ENCODE measurements at regions of chr1 and their contacts with region 1.

Region 1: GRCh38 chr1:199759268-199759724 is 268.2 kb upstream of the NR5A2 start:
- DNase-seq: peak; percentile 92
- ATAC-seq: peak; percentile 96
- H3K4me3 ChIP-seq: peak overlapping the region in 1 of 2 experiments; percentile 31; a peak in 3 of 4 replicates
- H3K27ac ChIP-seq: peak overlapping the region; percentile 84
- H3K4me1 ChIP-seq: peaks cover 16 to 37% of the 10 kb centered on the region in 2 experiments
- H3K27me3 ChIP-seq: no peaks in the 10 kb centered on the region
- CTCF ChIP-seq: no peak
- POLR2A ChIP-seq: no peak
- RAD21 ChIP-seq: no peak; the same call in 1 of the 2 replicates

Region 2: GRCh38 chr1:199667089-199667488 is 92.2 kb before region 1 on chr1:
- CTCF ChIA-PET with region 1: no interaction called
- POLR2A ChIA-PET with region 1: no interaction called
- RAD21 ChIA-PET with region 1: no interaction called
- intact Hi-C with region 1: no loop called
- DNase-seq: no peak
- ATAC-seq: no peak
- H3K4me3 ChIP-seq: no peak overlapping the region
- H3K27ac ChIP-seq: no peak overlapping the region
- H3K4me1 ChIP-seq: no peaks in the 10 kb centered on the region
- H3K27me3 ChIP-seq: no peaks in the 10 kb centered on the region
- CTCF ChIP-seq: no peak
- POLR2A ChIP-seq: no peak
- RAD21 ChIP-seq: no peak

Region 3: DNA sequence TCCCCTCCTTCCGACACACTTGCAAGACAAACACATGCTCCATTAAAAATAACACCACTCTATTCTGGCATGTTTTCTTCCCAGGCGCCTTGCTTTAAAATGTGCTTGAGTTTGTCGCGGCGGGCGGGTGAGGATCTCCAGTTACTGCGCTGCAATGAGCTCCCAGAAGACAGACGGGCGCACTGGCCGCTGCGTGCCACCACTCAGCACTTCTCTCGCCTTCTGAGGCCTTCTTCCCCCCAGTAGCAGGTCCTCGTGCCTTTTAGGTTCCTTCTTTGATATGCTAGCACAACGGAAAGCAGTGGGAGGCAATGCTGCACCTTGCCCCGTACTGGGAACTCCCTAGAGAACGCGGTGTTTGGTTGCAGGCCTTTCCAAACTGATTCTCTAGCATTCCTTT is 11.3 kb before region 1 on chr1:
- CTCF ChIA-PET with region 1: no interaction called
- POLR2A ChIA-PET with region 1: no interaction called
- RAD21 ChIA-PET with region 1: no interaction called
- intact Hi-C with region 1: no loop called
- DNase-seq: no peak
- ATAC-seq: no peak
- H3K4me3 ChIP-seq: no peak overlapping the region
- H3K27ac ChIP-seq: no peak overlapping the region
- H3K4me1 ChIP-seq: peaks cover 0 to 5% of the 10 kb centered on the region in 2 experiments; a peak in 2 of 4 replicates
- H3K27me3 ChIP-seq: no peaks in the 10 kb centered on the region
- CTCF ChIP-seq: no peak
- POLR2A ChIP-seq: no peak
- RAD21 ChIP-seq: no peak

Region 4: DNA sequence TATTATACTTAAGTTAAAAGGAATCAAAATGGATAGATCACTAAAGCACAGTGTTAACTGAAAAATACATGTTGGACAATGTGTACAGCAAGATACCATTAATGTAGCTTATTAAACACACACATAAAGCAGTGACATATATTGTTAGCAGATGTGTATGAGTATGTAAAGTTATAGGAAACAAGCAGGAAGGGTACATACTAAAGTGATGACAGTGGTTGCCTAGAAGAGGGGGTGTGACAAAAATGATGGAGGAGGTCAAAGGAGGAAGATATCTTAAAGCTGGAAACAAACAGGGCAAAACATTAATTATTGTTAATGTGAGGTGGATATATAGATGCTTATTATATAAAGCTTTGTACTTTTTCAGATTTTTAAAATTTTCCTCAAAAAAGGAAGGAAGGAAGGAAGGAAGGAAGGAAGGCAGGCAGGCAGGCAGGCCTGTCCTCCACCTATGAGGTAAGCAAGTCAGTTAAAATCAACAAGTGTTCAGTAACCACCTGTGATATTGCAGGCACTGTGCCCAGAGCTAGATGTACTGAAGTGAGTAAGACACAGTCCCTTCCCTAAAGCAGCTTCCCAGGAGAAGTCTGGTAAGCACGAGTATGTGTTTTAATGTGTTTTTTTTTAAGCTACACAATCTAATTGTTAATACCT is 15.3 kb after region 1 on chr1:
- CTCF ChIA-PET with region 1: no interaction called
- POLR2A ChIA-PET with region 1: interaction called, 13 read pairs
- RAD21 ChIA-PET with region 1: no interaction called
- intact Hi-C with region 1: no loop called
- DNase-seq: no peak
- ATAC-seq: no peak
- H3K4me3 ChIP-seq: no peak overlapping the region
- H3K27ac ChIP-seq: no peak overlapping the region
- H3K4me1 ChIP-seq: peaks cover 13 to 19% of the 10 kb centered on the region in 2 experiments; a peak in 3 of 4 replicates
- H3K27me3 ChIP-seq: no peaks in the 10 kb centered on the region
- CTCF ChIP-seq: no peak
- POLR2A ChIP-seq: no peak
- RAD21 ChIP-seq: no peak

Region 5: DNA sequence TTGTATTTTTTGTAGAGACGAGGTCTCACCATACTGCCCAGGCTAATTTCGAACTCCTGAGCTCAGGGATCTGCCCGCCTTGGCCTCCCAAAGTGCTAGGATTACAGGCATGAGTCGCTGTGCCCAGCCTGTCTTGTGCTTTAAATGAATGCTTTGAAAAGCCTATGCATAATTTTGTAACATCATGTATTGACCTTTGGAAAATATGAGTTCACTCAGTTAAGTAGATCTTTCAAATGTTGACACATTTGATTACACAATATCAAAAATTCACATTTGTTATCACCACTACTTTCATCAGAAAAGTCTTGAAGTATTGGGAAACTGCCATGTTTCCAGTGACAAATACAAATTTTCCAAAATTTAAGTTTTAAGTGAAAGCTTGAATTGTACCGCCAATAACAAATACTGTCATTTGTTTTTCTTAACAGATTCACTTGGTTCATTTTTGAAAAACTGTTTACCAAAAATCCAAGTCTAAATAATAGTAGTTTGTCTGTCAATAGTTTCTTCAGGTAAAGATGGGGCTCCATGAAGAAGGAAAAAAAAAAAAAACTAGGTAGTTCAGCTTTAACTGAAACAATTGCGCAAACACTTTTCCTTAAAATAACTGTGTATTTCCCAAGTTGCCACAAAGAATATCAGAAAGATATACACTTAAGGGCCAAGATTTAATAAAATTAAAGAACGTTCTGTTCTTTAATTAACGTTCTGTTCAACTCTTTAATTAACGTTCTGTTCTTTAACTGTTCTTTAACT is 35.0 kb after region 1 on chr1:
- CTCF ChIA-PET with region 1: no interaction called
- POLR2A ChIA-PET with region 1: no interaction called
- RAD21 ChIA-PET with region 1: no interaction called
- intact Hi-C with region 1: no loop called
- DNase-seq: no peak
- ATAC-seq: no peak
- H3K4me3 ChIP-seq: no peak overlapping the region
- H3K27ac ChIP-seq: no peak overlapping the region
- H3K4me1 ChIP-seq: peaks cover 4 to 6% of the 10 kb centered on the region in 2 experiments; a peak in 2 of 4 replicates
- H3K27me3 ChIP-seq: no peaks in the 10 kb centered on the region
- CTCF ChIP-seq: no peak
- POLR2A ChIP-seq: no peak
- RAD21 ChIP-seq: no peak

Measured in HCT116 (cell line).